ENCODE measurements at regions of chr9 and their contacts with region 1.

Region 1: GRCh38 chr9:137411671-137412380 is 11.1 kb downstream of the EXD3 start:
- DNase-seq: peak; percentile 94
- H3K4me3 ChIP-seq: no peak overlapping the region
- CTCF ChIP-seq: no peak

Region 2: GRCh38 chr9:137269231-137269772 is 142.5 kb before region 1 on chr9:
- in situ Hi-C with region 1: loop called (anchors 5 kb)
- DNase-seq: no peak
- H3K4me3 ChIP-seq: no peak overlapping the region
- CTCF ChIP-seq: no peak

Region 3: DNA sequence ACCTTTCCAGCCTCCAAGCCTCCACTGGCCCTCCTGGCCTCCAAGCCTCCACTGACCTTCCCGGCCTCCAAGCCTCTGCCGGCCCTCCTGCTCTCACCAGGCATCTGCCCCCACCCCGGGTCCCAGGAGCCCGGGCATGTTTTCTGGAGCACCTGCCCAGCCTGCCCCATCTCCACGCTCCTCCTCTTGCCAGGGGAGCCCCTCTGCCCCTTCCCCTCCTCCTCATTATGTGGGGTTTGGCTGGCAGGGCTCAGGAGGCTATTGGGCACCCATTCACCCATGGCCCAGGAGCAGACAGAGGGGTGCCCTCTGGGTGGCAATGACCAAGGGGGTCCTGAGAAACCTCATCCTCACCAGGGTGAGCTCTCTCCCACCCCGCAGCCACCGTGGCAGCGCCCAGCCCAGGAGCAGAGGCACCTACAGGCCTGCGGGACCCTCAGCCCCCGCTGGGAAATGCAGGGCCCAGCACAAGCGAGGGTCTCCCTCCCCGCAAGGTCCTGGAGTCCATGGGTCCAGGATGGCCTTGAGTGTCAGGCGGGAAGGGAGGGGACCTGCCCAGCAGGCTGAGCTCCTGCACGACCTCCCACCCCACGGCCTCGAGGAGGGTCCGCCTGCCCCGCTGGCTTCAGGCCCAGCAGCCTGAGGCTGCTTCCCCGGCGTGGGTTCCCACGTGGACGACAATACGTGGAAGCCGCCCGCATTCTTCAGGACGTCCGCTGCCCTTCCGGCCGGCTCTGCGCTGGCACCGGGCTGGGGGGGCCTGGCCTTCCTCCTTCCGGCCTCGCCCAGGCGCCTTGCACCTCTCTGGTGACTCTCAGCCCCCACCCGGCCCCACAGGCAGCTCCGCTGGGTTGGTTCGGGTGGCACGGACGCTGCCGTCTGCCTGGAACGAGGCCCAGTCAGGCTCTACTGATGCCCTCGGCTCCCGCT is 58.3 kb before region 1 on chr9:
- in situ Hi-C with region 1: no loop called
- DNase-seq: no peak
- H3K4me3 ChIP-seq: no peak overlapping the region
- CTCF ChIP-seq: no peak

Region 4: GRCh38 chr9:137368431-137369035 is 43.3 kb before region 1 on chr9:
- in situ Hi-C with region 1: loop called (anchors 10 kb)
- DNase-seq: no peak
- H3K4me3 ChIP-seq: no peak overlapping the region
- CTCF ChIP-seq: no peak

Measured in astrocyte of the cerebellum (primary cell).